ENCODE measurements at regions of chr22 and their contacts with region 1.

Region 1: GRCh38 chr22:19629720-19630419 is 84.4 kb upstream of the SEPTIN5 start:
- DNase-seq: peak; percentile 75
- H3K4me3 ChIP-seq: no peak overlapping the region
- H3K27ac ChIP-seq: no peak overlapping the region
- H3K4me1 ChIP-seq: no peaks in the 10 kb centered on the region
- H3K27me3 ChIP-seq: no peaks in the 10 kb centered on the region
- CTCF ChIP-seq: peak; percentile 79 to 93 (median 91)
- POLR2A ChIP-seq: no peak

Region 2: DNA sequence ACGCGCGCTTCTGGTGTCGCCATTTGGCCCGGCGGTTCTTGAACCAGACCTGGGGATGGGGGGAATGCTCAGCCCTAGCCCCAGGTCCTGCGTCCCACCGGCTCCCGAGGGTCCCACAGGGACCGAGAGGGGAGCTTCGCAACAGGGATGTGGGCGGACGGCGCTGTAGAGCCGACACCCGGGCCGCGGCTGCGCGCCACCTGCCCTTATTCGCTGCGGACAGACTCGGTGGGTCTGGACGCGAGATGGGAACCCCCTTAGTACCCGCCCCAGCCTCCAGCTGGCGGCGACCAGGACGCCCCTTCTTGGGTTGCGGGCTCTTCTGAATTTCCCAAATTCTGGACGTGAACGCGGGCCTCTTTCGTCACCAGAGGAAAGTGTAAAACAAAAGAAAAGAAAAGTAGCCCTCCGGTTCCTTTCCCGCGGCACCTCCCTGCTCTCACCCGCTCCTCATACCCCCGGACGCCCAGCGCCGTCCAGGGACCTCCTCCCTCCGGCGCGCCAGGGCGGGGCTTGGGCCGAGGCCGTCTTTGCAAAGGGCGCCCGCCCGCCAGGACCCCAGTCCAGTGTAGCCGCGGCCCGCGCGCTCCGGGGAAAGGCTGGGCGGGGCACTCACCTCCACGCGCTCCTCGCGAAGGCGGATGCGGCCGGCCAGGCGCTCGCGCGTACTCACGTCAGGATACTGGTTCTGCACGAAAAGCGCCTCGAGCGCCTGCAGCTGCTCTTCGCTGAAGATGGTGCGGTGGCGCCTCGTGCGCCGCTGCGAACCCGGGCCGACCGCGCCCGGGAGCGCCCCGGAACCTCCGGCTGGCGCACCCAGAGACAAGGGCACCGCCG is 480.6 kb before region 1 on chr22:
- intact Hi-C with region 1: loop called (anchors 5 kb)
- DNase-seq: no peak
- H3K4me3 ChIP-seq: peak overlapping the region in 1 of 2 donors; percentile 15
- H3K27ac ChIP-seq: no peak overlapping the region
- H3K4me1 ChIP-seq: peaks cover 3% of the 10 kb centered on the region
- H3K27me3 ChIP-seq: peaks cover 11% of the 10 kb centered on the region
- CTCF ChIP-seq: no peak
- POLR2A ChIP-seq: no peak

Region 3: GRCh38 chr22:19495562-19496323 is 134.1 kb before region 1 on chr22:
- intact Hi-C with region 1: loop called (anchors 10 kb)
- DNase-seq: no peak
- H3K4me3 ChIP-seq: no peak overlapping the region
- H3K27ac ChIP-seq: no peak overlapping the region
- H3K4me1 ChIP-seq: no peaks in the 10 kb centered on the region
- H3K27me3 ChIP-seq: no peaks in the 10 kb centered on the region
- CTCF ChIP-seq: peak in 3 of 4 experiments; percentile 24 to 36 (median 34)
- POLR2A ChIP-seq: no peak

Measured in prostate gland (tissue), 2 donors.